ENCODE measurements at regions of chr1 and their contacts with region 1.

Region 1: GRCh38 chr1:157369808-157370521 is 182.3 kb downstream of the FCRL5 start:
- DNase-seq: peak in 1 of 2 donors; percentile 25
- ATAC-seq: peak in 3 of 8 donors; percentile 59 to 71 (median 62)
- H3K4me3 ChIP-seq: no peak overlapping the region
- H3K27ac ChIP-seq: no peak overlapping the region
- H3K4me1 ChIP-seq: no peaks in the 10 kb centered on the region
- H3K27me3 ChIP-seq: peaks cover 0 to 16% (median 8%) of the 10 kb centered on the region in 7 donors
- CTCF ChIP-seq: peak; percentile 81 to 96 (median 94)

Region 2: DNA sequence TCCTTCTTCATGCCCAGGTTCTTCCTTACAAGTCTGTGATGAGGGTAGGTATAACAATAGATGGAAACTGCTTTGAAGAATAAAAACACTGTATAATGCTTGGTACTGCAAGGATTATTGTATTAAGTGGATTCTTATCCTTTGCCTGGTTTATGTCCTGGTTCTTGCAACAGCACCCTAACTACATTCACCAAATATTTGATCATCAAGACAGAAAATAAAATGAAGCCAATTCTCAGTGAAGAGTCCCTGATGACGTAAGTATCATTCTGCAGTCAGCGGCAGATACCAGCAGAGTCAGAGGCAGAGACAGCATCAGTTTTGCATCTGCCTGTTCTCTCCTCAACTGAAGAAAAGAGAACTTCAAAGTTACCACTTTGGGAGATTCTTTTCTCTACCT is 344.1 kb before region 1 on chr1:
- intact Hi-C with region 1: no loop called
- DNase-seq: no peak
- ATAC-seq: peak in 2 of 8 donors; percentile 29 to 67
- H3K4me3 ChIP-seq: no peak overlapping the region
- H3K27ac ChIP-seq: no peak overlapping the region
- H3K4me1 ChIP-seq: peaks cover 0 to 21% (median 16%) of the 10 kb centered on the region in 9 donors
- H3K27me3 ChIP-seq: no peaks in the 10 kb centered on the region
- CTCF ChIP-seq: no peak

Region 3: GRCh38 chr1:157105988-157106812 is 263.8 kb before region 1 on chr1:
- intact Hi-C with region 1: no loop called
- DNase-seq: peak in 1 of 2 donors; percentile 23
- ATAC-seq: peak; percentile 13 to 73 (median 56)
- H3K4me3 ChIP-seq: no peak overlapping the region
- H3K27ac ChIP-seq: peak overlapping the region in 1 of 10 donors; percentile 74
- H3K4me1 ChIP-seq: peaks cover 0 to 16% (median 0%) of the 10 kb centered on the region in 9 donors
- H3K27me3 ChIP-seq: peaks cover 0 to 72% (median 45%) of the 10 kb centered on the region in 7 donors
- CTCF ChIP-seq: no peak

Region 4: DNA sequence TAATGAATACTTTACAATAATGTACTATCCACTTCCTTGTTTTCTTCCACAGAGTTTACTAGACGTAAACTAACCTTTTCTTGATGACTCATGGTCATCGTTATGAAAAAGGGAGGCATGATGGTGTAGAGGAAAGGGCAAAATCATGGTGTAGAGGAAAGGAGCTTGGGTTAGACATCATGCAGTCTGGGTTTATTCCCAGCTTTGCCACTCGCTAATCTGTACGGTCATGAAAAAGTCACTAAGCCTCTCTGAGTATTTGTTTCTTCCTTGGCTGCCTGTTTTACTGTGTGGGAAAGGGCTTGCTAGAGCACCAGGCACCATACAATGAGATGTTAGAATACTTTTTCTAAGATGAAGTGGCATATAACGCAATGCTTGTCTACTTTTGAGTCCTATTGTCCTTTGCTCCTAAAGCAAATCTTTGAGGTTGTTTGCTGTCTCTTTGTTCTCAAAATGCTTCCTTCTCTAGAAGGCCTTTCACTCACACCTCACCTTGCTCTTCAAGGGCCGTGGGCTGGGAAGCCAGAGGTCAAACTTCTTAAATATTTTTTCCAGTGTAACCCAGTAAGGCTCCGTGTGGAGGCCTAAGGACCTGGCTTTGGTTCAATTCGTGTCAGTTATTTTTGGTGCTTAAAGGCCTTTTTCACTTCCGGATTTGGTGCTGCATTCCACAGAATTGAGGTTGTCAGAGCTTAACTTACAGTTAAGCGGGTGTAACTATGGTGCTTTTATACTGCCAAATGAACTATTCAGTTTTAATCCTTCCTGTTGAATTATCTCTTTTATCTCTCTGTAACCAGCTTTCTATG is 221.9 kb before region 1 on chr1:
- intact Hi-C with region 1: no loop called
- DNase-seq: no peak
- ATAC-seq: no peak
- H3K4me3 ChIP-seq: no peak overlapping the region
- H3K27ac ChIP-seq: peak overlapping the region in 2 of 10 donors; percentile 15 to 28
- H3K4me1 ChIP-seq: peaks cover 0 to 10% (median 0%) of the 10 kb centered on the region in 9 donors
- H3K27me3 ChIP-seq: no peaks in the 10 kb centered on the region
- CTCF ChIP-seq: no peak

Region 5: GRCh38 chr1:157193702-157194391 is 176.1 kb before region 1 on chr1:
- intact Hi-C with region 1: loop called in 2 of 10 experiments (anchors 10 kb)
- DNase-seq: peak; percentile 17 to 48
- ATAC-seq: no peak
- H3K4me3 ChIP-seq: no peak overlapping the region
- H3K27ac ChIP-seq: no peak overlapping the region
- H3K4me1 ChIP-seq: peaks cover 0 to 6% (median 0%) of the 10 kb centered on the region in 9 donors
- H3K27me3 ChIP-seq: peaks cover 8 to 74% (median 57%) of the 10 kb centered on the region in 7 donors
- CTCF ChIP-seq: peak; percentile 13 to 74 (median 60)

Region 6: GRCh38 chr1:157307491-157307890 is 62.5 kb before region 1 on chr1:
- intact Hi-C with region 1: no loop called
- DNase-seq: no peak
- ATAC-seq: no peak
- H3K4me3 ChIP-seq: no peak overlapping the region
- H3K27ac ChIP-seq: no peak overlapping the region
- H3K4me1 ChIP-seq: no peaks in the 10 kb centered on the region
- H3K27me3 ChIP-seq: peaks cover 0 to 30% (median 19%) of the 10 kb centered on the region in 7 donors
- CTCF ChIP-seq: no peak